Colonic mucosa (tissue), 4 donors: ENCODE measurements at regions of chr22 and their contacts with region 1.

Region 1: DNA sequence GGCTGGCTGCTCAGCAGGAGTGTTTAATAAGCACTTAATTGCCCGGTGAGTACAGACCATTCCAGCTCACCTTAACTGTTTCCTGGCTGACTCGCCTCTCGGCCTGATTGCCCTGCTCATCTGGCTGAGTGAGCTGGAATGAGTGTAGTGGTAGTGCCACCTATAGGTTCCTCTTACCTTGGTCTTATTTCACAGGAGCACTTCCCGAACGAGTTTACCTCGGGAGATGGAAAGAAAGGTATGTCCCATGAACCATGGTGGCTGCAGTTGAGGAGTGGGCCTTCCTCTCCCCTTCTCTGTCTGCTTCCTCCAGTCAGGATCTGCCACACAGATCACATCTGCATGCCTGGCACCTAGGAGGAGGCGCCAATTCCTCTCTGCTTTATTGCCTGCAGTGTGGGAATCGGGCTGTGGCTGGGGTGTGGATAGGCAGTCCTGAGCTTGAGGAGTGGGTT is 26.7 kb downstream of the UPB1 start:
- DNase-seq: peak; percentile 57
- H3K4me3 ChIP-seq: no peak overlapping the region
- H3K27ac ChIP-seq: no peak overlapping the region
- H3K4me1 ChIP-seq: no peaks in the 10 kb centered on the region
- H3K27me3 ChIP-seq: no peaks in the 10 kb centered on the region
- CTCF ChIP-seq: peak; percentile 38

Region 2: GRCh38 chr22:24265734-24266133 is 256.1 kb before region 1 on chr22:
- intact Hi-C with region 1: loop called (anchors 5 kb)
- DNase-seq: no peak
- H3K4me3 ChIP-seq: no peak overlapping the region
- H3K27ac ChIP-seq: no peak overlapping the region
- H3K4me1 ChIP-seq: no peaks in the 10 kb centered on the region
- H3K27me3 ChIP-seq: no peaks in the 10 kb centered on the region
- CTCF ChIP-seq: no peak

Region 3: DNA sequence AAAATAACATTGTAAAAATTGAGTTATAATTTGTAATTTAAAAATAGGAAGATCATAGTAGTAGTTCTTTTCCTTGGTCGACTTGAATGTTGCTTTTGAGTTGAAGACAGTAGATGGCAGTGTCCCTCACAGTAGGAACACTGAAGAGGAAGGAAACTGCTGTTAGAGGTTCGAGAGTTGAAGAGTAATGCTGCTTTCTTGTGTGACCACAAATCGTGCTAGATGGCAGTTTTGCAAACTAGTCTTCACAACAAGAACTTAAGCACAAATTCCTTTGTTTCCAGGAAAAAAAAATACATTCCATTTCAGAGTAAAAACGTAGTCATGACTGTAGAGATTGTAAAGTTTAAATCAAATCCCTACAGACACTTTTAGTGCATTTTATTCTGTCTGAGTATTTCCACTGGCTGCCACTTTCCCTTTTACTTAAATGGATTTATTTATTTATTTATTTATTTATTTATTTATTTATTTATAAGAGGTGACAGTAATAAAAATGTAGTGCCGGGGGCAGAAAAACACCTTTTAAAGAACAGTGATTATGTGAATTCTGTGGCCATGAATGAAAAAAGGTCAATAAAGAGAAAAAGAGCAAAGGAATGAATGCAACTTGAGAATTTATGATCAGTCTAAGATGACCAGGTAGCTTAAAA is 196.6 kb before region 1 on chr22:
- intact Hi-C with region 1: loop called (anchors 5 kb)
- DNase-seq: peak; percentile 34
- H3K4me3 ChIP-seq: no peak overlapping the region
- H3K27ac ChIP-seq: no peak overlapping the region
- H3K4me1 ChIP-seq: no peaks in the 10 kb centered on the region
- H3K27me3 ChIP-seq: no peaks in the 10 kb centered on the region
- CTCF ChIP-seq: peak; percentile 40

Region 4: GRCh38 chr22:24410110-24410856 is 111.5 kb before region 1 on chr22:
- intact Hi-C with region 1: no loop called
- DNase-seq: no peak
- H3K4me3 ChIP-seq: no peak overlapping the region
- H3K27ac ChIP-seq: no peak overlapping the region
- H3K4me1 ChIP-seq: no peaks in the 10 kb centered on the region
- H3K27me3 ChIP-seq: no peaks in the 10 kb centered on the region
- CTCF ChIP-seq: no peak

Region 5: GRCh38 chr22:24423519-24424000 is 98.3 kb before region 1 on chr22:
- intact Hi-C with region 1: loop called (anchors 5 kb)
- DNase-seq: peak; percentile 60
- H3K4me3 ChIP-seq: peak overlapping the region; percentile 49
- H3K27ac ChIP-seq: no peak overlapping the region
- H3K4me1 ChIP-seq: no peaks in the 10 kb centered on the region
- H3K27me3 ChIP-seq: peaks cover 16% of the 10 kb centered on the region
- CTCF ChIP-seq: peak; percentile 88

Region 6: GRCh38 chr22:24744638-24745037 is 222.8 kb after region 1 on chr22:
- intact Hi-C with region 1: no loop called
- DNase-seq: no peak
- H3K4me3 ChIP-seq: no peak overlapping the region
- H3K27ac ChIP-seq: no peak overlapping the region
- H3K4me1 ChIP-seq: no peaks in the 10 kb centered on the region
- H3K27me3 ChIP-seq: no peaks in the 10 kb centered on the region
- CTCF ChIP-seq: no peak

Region 7: DNA sequence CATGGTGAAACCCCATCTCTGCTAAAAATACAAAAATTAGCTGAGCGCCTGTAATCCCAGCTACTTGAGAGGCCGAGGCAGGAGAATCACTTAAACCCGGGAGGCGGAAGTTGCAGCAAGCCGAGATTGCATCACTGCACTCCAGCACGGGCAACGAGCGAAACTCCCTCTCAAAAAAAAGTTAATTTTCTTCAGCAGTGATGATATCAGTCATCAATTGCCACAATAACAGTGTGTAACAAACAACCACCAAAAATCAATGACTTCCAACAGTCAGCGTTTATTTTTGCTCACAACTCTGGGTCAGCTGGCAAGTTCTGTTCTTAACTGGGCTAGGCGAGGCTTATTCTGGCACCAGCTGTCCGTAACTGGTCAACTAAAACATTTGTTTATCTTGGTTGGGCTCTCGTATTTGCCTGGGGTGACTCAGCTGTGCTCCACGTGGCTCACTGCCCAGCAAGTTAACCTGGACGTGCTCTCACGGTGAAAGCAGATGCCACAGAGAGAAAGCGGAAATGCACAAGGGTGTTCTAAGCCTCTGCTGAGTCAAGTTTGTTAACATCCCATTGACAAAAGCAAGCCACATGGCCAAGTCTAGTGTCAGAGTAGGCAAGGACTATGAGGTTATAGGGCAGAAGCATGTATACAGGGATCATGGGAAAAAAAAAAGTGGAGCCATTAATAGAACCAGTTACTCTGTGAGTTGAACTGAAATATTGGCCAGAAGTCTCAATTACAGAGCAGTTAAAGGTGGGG is 372.6 kb after region 1 on chr22:
- intact Hi-C with region 1: no loop called
- DNase-seq: peak; percentile 93
- H3K4me3 ChIP-seq: no peak overlapping the region
- H3K27ac ChIP-seq: peak overlapping the region; percentile 90
- H3K4me1 ChIP-seq: peaks cover 6% of the 10 kb centered on the region
- H3K27me3 ChIP-seq: no peaks in the 10 kb centered on the region
- CTCF ChIP-seq: no peak